ENCODE measurements at regions of chr1 and their contacts with region 1.

Region 1: GRCh38 chr1:171313835-171314320 is at the start of gene FMO4:
- DNase-seq: peak; percentile 83 to 88 (median 86)
- ATAC-seq: peak; percentile 100
- H3K4me3 ChIP-seq: no peak within 1 kb of the TSS
- H3K27ac ChIP-seq: no peak within 1 kb of the TSS; the same call in 2 of the 3 replicates
- H3K4me1 ChIP-seq: no peaks in the 10 kb centered on the region
- H3K27me3 ChIP-seq: no peaks in the 10 kb centered on the region
- CTCF ChIP-seq: peak; percentile 77 to 85 (median 79)
- EP300 ChIP-seq: no peak
- POLR2A ChIP-seq: no peak
- RAD21 ChIP-seq: peak; percentile 39 to 69; a peak in 3 of 4 replicates
- polyA plus RNA-seq, gene FMO4: 0.83 to 1.1 TPM

Region 2: GRCh38 chr1:171127501-171127900 is 186.4 kb before region 1 on chr1:
- CTCF ChIA-PET with region 1: no interaction called
- POLR2A ChIA-PET with region 1: no interaction called
- in situ Hi-C with region 1: no loop called
- intact Hi-C with region 1: no loop called
- DNase-seq: no peak
- ATAC-seq: no peak
- H3K4me3 ChIP-seq: no peak overlapping the region
- H3K27ac ChIP-seq: no peak overlapping the region
- H3K4me1 ChIP-seq: no peaks in the 10 kb centered on the region
- H3K27me3 ChIP-seq: no peaks in the 10 kb centered on the region
- CTCF ChIP-seq: no peak
- EP300 ChIP-seq: no peak
- POLR2A ChIP-seq: no peak
- RAD21 ChIP-seq: no peak

Region 3: DNA sequence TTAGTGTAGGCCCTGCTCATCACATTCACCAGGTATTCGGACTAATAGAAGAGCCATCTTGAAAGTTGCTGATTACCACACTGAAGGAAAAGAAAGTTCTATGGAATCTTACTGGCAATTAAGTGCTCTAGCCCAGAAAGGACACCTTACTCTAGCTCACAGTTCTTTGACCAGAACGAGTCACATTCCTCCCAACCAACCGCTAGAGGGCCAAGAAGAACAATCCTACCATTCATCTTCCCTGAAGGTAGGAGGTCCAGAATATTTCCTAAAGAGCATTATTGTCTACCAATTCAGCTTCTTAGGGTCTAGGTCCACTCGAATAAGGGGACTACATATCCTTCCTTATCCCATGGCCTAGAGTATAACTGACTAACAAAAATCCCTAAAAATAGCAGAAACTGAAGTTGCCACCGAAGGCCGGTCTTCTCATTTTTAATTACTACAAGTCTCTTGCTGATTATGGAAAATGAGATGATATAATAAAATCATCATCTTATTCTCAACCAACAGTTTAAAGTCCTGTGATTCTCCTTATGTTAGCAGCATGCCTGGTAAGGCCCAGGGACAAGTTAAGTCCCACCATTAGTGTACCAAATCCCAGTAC is 68.3 kb before region 1 on chr1:
- CTCF ChIA-PET with region 1: interaction called, 3 read pairs
- POLR2A ChIA-PET with region 1: no interaction called
- in situ Hi-C with region 1: no loop called
- intact Hi-C with region 1: loop called (anchors 5 kb)
- DNase-seq: peak; percentile 50 to 55 (median 50)
- ATAC-seq: peak; percentile 92
- H3K4me3 ChIP-seq: no peak overlapping the region
- H3K27ac ChIP-seq: no peak overlapping the region
- H3K4me1 ChIP-seq: no peaks in the 10 kb centered on the region
- H3K27me3 ChIP-seq: peaks cover 0 to 4% of the 10 kb centered on the region in 2 experiments; a peak in 1 of 5 replicates
- CTCF ChIP-seq: peak; percentile 57 to 71 (median 61)
- EP300 ChIP-seq: no peak
- POLR2A ChIP-seq: no peak
- RAD21 ChIP-seq: peak in 1 of 2 experiments; percentile 62; a peak in 3 of 4 replicates

Region 4: GRCh38 chr1:171355727-171356126 is 41.8 kb after region 1 on chr1:
- CTCF ChIA-PET with region 1: no interaction called
- POLR2A ChIA-PET with region 1: no interaction called
- in situ Hi-C with region 1: no loop called
- intact Hi-C with region 1: no loop called
- DNase-seq: no peak
- ATAC-seq: no peak
- H3K4me3 ChIP-seq: no peak overlapping the region
- H3K27ac ChIP-seq: no peak overlapping the region
- H3K4me1 ChIP-seq: no peaks in the 10 kb centered on the region
- H3K27me3 ChIP-seq: no peaks in the 10 kb centered on the region; a peak in 1 of 5 replicates
- CTCF ChIP-seq: no peak
- EP300 ChIP-seq: no peak
- POLR2A ChIP-seq: no peak
- RAD21 ChIP-seq: no peak

Region 5: DNA sequence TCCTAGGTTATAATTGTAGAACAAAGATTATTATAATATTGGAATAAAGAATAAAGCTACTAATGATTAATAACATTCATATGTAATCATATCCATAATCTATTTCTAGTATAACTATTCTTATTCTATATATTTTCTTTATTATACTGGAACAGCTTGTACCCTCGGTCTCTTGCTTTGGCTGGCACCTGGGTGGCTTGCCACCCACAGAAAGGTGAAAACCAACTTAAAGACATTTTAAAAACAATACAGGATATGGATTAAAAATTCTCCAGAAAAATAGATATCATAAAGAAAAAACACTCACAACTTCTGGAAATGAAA is 91.5 kb after region 1 on chr1:
- CTCF ChIA-PET with region 1: no interaction called
- POLR2A ChIA-PET with region 1: no interaction called
- in situ Hi-C with region 1: no loop called
- intact Hi-C with region 1: loop called (anchors 2 kb)
- DNase-seq: no peak
- ATAC-seq: no peak
- H3K4me3 ChIP-seq: no peak overlapping the region
- H3K27ac ChIP-seq: no peak overlapping the region
- H3K4me1 ChIP-seq: no peaks in the 10 kb centered on the region
- H3K27me3 ChIP-seq: no peaks in the 10 kb centered on the region
- CTCF ChIP-seq: no peak
- EP300 ChIP-seq: no peak
- POLR2A ChIP-seq: no peak
- RAD21 ChIP-seq: no peak

Region 6: DNA sequence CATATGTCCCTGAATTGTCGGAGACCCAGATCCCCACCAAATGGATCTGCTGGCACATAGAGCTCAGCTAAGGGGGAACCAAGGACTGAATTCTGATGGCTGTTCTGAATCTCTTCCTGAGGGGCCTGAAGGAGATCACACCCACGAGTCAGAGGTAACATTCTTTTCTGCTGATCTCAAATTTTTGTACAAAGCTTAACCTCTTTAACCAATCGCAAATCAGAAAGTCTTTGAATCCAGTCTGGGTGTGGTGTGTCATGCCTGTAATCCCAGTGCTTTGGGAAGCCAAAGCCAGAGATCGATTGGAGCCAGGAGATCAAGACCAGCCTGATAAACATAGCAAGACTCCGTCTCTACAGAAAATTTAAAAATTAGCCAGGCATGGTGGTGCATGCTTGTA is 108.6 kb after region 1 on chr1:
- CTCF ChIA-PET with region 1: no interaction called
- POLR2A ChIA-PET with region 1: no interaction called
- in situ Hi-C with region 1: no loop called
- intact Hi-C with region 1: no loop called
- DNase-seq: no peak
- ATAC-seq: no peak
- H3K4me3 ChIP-seq: no peak overlapping the region
- H3K27ac ChIP-seq: no peak overlapping the region
- H3K4me1 ChIP-seq: no peaks in the 10 kb centered on the region
- H3K27me3 ChIP-seq: peaks cover 13 to 36% of the 10 kb centered on the region in 2 experiments
- CTCF ChIP-seq: no peak
- EP300 ChIP-seq: no peak
- POLR2A ChIP-seq: no peak
- RAD21 ChIP-seq: no peak